Common myeloid progenitor, CD34-positive (primary cell): ENCODE measurements at regions of chr17 and their contacts with region 1.

Region 1: DNA sequence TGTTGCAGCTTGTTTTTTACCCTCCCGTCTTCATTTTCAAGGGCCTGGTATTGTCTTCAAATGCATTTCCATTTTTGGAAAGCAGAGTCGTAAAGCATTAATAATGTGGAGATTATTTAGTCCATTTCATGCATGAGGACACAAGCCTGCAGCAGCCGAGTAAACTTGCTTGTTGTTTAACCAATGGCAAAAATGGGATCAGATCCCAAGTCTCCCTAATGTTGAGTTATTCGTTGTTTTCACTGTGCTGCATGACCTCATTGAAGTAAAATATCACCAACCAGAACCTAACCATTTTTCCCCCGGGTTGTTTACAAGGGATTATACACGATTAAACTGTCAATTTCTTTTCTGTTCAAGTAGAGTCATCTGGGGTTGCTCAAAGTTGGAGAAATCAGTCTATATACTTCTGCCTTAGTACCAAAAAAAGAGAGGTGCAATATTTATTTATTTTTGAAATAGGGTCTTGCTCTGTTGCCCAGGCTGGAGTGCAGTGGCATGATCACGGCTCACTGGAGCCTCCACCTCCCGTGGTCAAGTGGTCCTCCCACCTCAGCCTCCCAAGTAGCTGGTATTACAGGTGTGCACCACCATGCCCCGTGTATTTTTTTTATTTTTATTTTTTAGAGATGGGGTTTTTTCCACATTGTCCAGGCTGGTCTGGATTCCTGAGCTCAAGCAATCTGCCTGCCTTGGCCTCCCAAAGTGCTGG is 12.4 kb downstream of the AMZ2 start:
- DNase-seq: no peak
- H3K4me3 ChIP-seq: no peak overlapping the region
- H3K27ac ChIP-seq: no peak overlapping the region
- H3K4me1 ChIP-seq: peaks cover 19 to 51% (median 38%) of the 10 kb centered on the region in 4 experiments
- H3K27me3 ChIP-seq: no peaks in the 10 kb centered on the region

Region 2: DNA sequence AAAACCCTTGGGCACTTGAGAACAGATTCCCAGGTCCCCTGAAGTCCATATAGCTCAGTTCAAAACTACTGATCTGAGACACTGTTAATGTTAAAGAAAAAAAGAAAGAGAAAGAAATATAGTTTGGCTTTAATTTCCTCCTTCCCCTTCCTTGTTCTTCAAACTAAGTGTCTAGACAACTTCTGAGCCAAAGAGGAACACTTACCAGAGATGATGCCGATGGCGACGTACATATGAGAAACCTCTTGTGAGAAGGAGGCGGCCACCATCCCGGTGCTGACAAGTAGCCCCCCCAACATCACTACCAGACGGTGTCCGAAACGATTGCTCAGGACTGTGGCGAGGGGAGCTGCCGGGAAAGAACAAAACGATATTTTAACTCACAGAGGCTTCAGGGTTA is 13.5 kb after region 1 on chr17:
- CTCF ChIA-PET with region 1: interaction called, 17 read pairs
- POLR2A ChIA-PET with region 1: no interaction called
- DNase-seq: peak in 1 of 3 donors; percentile 26
- H3K4me3 ChIP-seq: no peak overlapping the region
- H3K27ac ChIP-seq: no peak overlapping the region
- H3K4me1 ChIP-seq: peaks cover 0 to 2% (median 0%) of the 10 kb centered on the region in 4 experiments
- H3K27me3 ChIP-seq: no peaks in the 10 kb centered on the region

Region 3: GRCh38 chr17:68398691-68399637 is 138.8 kb after region 1 on chr17:
- CTCF ChIA-PET with region 1: interaction called, 49 read pairs
- POLR2A ChIA-PET with region 1: no interaction called
- DNase-seq: peak; percentile 39 to 42 (median 39)
- H3K4me3 ChIP-seq: no peak overlapping the region
- H3K27ac ChIP-seq: no peak overlapping the region
- H3K4me1 ChIP-seq: peaks cover 0 to 14% (median 6%) of the 10 kb centered on the region in 4 experiments
- H3K27me3 ChIP-seq: peaks cover 0 to 2% (median 0%) of the 10 kb centered on the region in 5 experiments

Region 4: DNA sequence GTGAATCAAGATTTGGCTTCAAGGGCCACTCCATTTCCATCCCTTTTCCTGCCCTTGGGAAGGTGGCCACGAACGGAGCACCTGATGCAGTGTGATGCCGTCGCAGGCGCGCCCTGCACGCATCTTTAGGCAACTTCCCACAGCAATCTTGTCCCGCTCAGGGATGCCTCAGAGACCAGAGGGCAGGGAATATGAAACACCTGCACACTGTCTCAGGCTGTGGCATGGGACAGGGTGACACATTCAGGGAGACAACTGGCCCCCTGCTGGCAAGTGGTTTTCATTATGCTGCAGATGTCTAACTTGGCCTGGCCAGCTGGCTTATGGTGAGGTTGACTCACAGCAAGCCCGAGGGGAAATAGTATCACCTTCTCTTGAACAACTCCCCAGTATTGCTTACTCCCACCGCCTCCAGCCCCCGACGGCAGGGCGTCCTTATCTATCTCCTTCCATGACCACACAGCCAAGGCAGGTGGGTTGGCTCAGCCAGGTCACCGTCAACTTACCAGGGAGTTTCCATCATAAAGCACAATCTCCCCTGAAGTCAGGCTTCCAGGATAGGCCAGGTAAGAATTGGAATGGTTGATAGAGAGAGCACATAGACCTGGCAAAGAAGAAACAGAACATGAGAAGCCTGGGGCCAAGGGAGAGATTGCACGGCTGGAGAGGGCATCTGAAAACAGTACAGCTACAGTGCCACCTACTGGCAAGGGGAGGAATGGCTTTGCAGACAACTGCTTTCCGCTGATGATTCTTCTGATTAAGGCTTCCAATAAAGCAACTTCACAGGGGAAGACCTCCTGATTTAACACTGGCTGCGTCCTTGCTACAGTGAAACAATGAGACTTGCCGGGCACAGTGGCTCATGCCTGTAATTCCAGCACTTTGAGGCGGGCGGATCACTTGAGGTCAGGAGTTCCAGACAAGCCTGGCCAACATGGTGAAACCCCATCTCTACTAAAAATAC is 176.0 kb after region 1 on chr17:
- CTCF ChIA-PET with region 1: interaction called, 22 read pairs
- POLR2A ChIA-PET with region 1: interaction called, 3 read pairs
- DNase-seq: peak; percentile 84 to 92 (median 88)
- H3K4me3 ChIP-seq: no peak overlapping the region
- H3K27ac ChIP-seq: no peak overlapping the region
- H3K4me1 ChIP-seq: peaks cover 31 to 52% (median 42%) of the 10 kb centered on the region in 4 experiments
- H3K27me3 ChIP-seq: no peaks in the 10 kb centered on the region